ENCODE measurements at regions of chr1 and their contacts with region 1.

Region 1: GRCh38 chr1:47738560-47739182 is 258.5 kb downstream of the TRABD2B start:
- DNase-seq: peak; percentile 61

Region 2: GRCh38 chr1:47859092-47859743 is 120.5 kb after region 1 on chr1:
- intact Hi-C with region 1: no loop called
- DNase-seq: no peak

Region 3: DNA sequence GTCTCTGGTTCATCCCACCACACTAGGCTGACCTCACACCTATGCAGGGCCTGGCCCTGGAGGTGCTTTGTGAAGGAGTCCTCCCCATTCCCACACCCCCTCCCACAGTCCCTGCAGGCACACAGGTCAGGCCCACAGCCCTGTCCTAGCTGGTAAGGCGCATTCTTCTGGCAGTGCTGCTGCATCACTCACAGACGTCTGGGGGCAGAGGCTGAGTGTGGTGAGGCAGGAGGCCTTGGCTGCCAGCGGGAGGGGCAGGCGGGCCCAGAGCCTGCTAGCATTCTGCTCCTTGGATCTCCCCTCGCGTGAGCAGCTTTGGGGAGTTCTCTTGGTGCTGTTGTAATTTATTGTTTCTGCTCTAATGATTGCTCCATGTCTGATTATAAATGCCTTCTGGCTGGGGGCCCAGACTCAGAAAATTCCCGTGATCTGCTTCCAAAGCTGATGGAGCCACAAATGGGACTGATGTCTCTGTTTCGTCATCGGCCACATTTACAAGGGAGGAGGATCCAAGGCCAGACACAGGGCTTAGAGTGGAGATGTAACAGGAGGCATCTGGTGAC is 195.7 kb after region 1 on chr1:
- intact Hi-C with region 1: loop called (anchors 5 kb)
- DNase-seq: peak; percentile 55

Region 4: GRCh38 chr1:47997289-47998200 is 258.9 kb after region 1 on chr1 and contains the start of gene TRABD2B:
- intact Hi-C with region 1: loop called (anchors 5 kb)
- DNase-seq: peak; percentile 91
- total RNA-seq, gene TRABD2B: 3.4 TPM

Region 5: DNA sequence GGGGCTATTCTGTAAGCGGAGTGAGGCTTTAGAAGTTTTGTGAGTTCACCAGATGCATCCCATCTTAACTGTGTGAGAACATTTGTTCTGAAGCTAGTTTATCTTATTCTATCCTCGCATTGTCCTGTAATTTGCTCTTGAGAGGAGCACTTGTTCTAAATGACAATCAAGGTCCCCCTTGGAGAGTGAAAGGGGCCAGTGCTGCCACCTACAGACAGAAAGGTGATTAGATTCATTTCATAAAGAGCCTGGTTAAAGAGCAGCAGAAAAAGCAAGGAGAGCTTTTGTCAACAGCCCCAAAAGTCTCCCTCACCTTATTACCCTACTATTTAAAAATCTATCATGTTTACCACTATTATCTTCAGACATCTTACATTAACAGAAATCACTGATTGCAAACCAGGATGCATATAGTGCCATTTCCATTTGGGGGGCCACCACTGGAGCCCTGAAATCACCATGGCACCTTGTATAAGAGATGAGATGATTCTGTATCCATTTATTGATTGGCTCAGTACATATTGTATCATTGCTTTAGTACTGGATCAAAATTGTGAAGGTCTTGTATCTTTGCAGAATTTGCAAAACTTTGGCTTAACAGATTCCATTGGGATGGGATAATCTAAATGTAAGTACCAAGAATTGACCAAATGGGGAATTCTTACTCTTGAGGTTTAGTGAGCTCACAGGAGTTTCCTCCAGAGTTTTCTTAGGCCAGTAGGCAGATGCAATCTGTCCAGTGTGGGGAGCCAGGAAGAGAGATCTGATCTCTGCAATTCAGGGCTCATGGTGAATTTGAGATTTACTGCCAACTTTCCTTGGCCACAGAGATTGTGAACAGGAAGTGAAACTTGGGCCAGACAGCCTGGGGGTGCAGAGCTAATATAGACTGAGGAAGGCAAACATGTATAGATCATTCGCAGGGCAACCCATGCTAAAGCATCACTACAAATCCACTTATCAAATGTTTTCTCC is 322.8 kb after region 1 on chr1:
- intact Hi-C with region 1: loop called (anchors 5 kb)
- DNase-seq: no peak

Region 6: DNA sequence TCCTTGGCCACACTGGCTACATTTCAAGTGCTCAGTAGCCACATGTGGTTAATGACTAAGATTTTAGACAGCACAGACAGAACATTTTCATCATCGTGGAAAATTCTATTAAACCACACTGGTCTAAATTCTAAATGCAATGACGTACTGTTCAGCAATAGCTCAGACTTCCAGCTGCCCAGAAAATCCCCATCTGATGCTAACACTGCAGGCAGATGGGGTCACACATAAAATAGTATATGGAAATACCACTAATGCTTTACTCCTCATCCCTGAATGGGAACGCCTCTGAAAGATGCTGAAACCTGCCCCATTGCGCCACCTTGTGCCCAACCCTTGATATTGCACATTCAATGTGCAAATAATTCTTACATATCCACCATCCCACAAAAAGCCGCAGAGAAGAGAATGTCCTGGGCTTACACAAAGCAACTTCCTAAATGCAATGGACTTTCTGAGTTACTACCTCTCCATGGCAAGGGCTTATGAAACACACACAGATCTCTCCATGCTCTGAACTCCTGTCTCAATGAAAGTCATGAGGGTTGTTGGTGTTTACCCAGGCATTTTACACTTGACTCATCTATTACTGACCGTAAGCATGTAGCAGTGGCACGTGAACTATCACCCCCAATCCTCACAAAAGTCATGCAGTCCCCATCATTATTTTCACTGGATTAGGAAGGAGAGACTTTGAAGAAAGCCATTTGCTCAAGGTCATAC is 463.5 kb after region 1 on chr1:
- intact Hi-C with region 1: loop called (anchors 5 kb)
- DNase-seq: peak; percentile 87